CD8-positive, alpha-beta T cell (primary cell): ENCODE measurements at regions of chr1 and their contacts with region 1.

Region 1: GRCh38 chr1:148334339-148335130 is 148.6 kb downstream of the PPIAL4G start:
- DNase-seq: peak; percentile 59 to 86 (median 77)
- ATAC-seq: peak; percentile 74
- H3K4me3 ChIP-seq: peak overlapping the region; percentile 36 to 88
- H3K4me3 Mint-ChIP-seq: peak overlapping the region; percentile 97
- H3K27ac ChIP-seq: peak overlapping the region; percentile 82 to 84
- H3K27ac Mint-ChIP-seq: peak overlapping the region; percentile 100
- H3K4me1 ChIP-seq: peaks cover 27% of the 10 kb centered on the region
- H3K4me1 Mint-ChIP-seq: peaks cover 37% of the 10 kb centered on the region
- H3K27me3 ChIP-seq: no peaks in the 10 kb centered on the region
- H3K27me3 Mint-ChIP-seq: peaks cover 9% of the 10 kb centered on the region
- CTCF ChIP-seq: no peak

Region 2: DNA sequence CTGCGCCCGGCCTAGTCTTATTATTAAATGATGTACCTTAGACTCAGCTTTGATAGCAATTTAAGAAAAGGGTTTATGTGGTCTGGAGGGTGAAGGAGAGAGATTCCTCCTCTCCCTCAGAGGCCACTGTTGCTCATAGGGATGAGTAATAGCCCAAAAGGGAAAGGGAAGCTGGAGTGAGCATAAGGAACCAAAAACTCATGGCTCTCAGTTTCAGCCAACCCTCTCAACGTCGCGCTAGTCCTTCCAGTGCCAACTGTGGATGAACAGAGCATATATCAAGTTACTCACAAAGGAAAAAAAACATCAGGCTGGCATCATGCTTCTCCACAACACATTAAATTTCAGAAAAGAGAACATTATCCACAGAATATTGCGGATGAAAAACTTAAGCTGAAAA is 414.6 kb before region 1 on chr1:
- CTCF ChIA-PET with region 1: no interaction called
- POLR2A ChIA-PET with region 1: no interaction called
- intact Hi-C with region 1: no loop called
- DNase-seq: no peak
- ATAC-seq: no peak
- H3K4me3 ChIP-seq: no peak overlapping the region
- H3K4me3 Mint-ChIP-seq: no peak overlapping the region
- H3K27ac ChIP-seq: no peak overlapping the region
- H3K27ac Mint-ChIP-seq: no peak overlapping the region
- H3K4me1 ChIP-seq: no peaks in the 10 kb centered on the region
- H3K4me1 Mint-ChIP-seq: no peaks in the 10 kb centered on the region
- H3K27me3 ChIP-seq: peaks cover 0 to 2% of the 10 kb centered on the region in 2 experiments
- H3K27me3 Mint-ChIP-seq: peaks cover 10% of the 10 kb centered on the region
- CTCF ChIP-seq: no peak

Region 3: GRCh38 chr1:148263128-148263905 is 71.2 kb before region 1 on chr1:
- CTCF ChIA-PET with region 1: no interaction called
- POLR2A ChIA-PET with region 1: interaction called, 8 read pairs
- intact Hi-C with region 1: loop called in 1 of 2 experiments (anchors 1 kb)
- DNase-seq: peak; percentile 24 to 86 (median 60)
- ATAC-seq: peak; percentile 84
- H3K4me3 ChIP-seq: peak overlapping the region; percentile 62 to 63
- H3K4me3 Mint-ChIP-seq: peak overlapping the region; percentile 95
- H3K27ac ChIP-seq: peak overlapping the region; percentile 71 to 85
- H3K27ac Mint-ChIP-seq: peak overlapping the region; percentile 99
- H3K4me1 ChIP-seq: no peaks in the 10 kb centered on the region
- H3K4me1 Mint-ChIP-seq: peaks cover 19% of the 10 kb centered on the region
- H3K27me3 ChIP-seq: no peaks in the 10 kb centered on the region
- H3K27me3 Mint-ChIP-seq: no peaks in the 10 kb centered on the region
- CTCF ChIP-seq: no peak

Region 4: DNA sequence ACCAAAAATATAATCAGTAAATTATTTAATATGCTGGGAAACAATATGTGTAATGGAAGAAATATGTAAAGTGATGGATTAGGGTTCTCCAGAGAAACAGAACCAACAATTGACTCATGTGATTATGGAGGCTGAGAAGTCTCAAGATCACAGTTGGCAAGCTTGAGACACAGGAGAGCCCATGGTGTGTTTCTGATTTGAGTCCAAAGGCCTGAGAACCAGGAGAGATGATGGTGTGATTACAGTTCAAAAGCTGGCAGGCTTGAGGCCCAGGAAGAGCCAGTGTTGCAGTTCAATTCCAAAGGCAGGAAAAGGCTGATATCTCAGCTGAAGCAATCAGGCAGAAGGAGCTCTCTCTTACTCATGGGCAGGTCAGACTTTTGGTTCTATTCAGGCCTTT is 43.7 kb before region 1 on chr1:
- CTCF ChIA-PET with region 1: no interaction called
- POLR2A ChIA-PET with region 1: no interaction called
- intact Hi-C with region 1: no loop called
- DNase-seq: no peak
- ATAC-seq: no peak
- H3K4me3 ChIP-seq: no peak overlapping the region
- H3K4me3 Mint-ChIP-seq: no peak overlapping the region
- H3K27ac ChIP-seq: no peak overlapping the region
- H3K27ac Mint-ChIP-seq: no peak overlapping the region
- H3K4me1 ChIP-seq: no peaks in the 10 kb centered on the region
- H3K4me1 Mint-ChIP-seq: no peaks in the 10 kb centered on the region
- H3K27me3 ChIP-seq: no peaks in the 10 kb centered on the region
- H3K27me3 Mint-ChIP-seq: peaks cover 13% of the 10 kb centered on the region
- CTCF ChIP-seq: no peak

Region 5: DNA sequence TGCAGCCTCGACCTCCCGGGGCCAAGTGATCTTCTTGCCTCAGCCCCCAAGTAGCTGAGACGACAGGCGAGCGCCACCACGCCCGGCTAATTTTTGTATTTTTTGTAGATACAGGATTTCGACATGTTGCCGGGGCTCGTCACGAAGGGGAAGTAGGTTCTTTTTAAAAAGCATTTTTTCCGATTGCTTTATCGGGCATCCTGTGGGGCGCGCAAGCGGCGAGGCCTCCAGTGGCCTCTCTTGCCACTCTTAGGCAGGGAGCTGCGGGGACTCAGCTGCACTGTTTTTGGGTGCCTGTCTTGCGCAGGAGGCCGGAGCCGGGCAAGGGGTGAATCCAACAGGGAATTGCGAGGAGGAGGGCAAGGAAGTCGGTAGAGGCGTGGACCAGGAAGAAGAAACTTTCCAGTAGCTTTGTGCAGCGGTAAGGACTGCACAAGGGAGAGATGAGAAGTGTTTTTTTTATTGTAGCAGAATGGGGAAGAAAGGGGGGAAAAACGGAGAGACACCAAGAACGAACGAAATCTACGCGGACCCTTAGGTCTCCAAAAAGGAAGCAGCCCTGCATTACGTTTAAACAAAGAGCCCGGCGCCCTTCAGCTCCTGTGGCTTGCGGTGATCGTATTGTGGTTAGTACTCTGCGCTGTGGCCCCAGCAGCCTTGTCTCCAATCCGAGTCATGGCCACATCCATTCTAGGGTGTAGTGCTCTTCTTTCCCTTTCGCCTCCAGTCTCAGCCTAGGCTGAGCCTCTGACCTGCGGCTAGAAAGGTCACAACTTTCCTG is 16.2 kb before region 1 on chr1:
- CTCF ChIA-PET with region 1: no interaction called
- POLR2A ChIA-PET with region 1: interaction called, 7 read pairs
- intact Hi-C with region 1: loop called in 1 of 2 experiments (anchors 2 kb)
- DNase-seq: peak in 8 of 9 experiments; percentile 49 to 81 (median 64)
- ATAC-seq: peak; percentile 80
- H3K4me3 ChIP-seq: peak overlapping the region; percentile 40 to 72
- H3K4me3 Mint-ChIP-seq: peak overlapping the region; percentile 86
- H3K27ac ChIP-seq: peak overlapping the region in 1 of 2 experiments; percentile 9
- H3K27ac Mint-ChIP-seq: peak overlapping the region; percentile 42
- H3K4me1 ChIP-seq: peaks cover 13% of the 10 kb centered on the region
- H3K4me1 Mint-ChIP-seq: peaks cover 24% of the 10 kb centered on the region
- H3K27me3 ChIP-seq: no peaks in the 10 kb centered on the region
- H3K27me3 Mint-ChIP-seq: peaks cover 6% of the 10 kb centered on the region
- CTCF ChIP-seq: no peak